Tibial artery (tissue), 4 donors: ENCODE measurements at regions of chr17 and their contacts with region 1.

Region 1: DNA sequence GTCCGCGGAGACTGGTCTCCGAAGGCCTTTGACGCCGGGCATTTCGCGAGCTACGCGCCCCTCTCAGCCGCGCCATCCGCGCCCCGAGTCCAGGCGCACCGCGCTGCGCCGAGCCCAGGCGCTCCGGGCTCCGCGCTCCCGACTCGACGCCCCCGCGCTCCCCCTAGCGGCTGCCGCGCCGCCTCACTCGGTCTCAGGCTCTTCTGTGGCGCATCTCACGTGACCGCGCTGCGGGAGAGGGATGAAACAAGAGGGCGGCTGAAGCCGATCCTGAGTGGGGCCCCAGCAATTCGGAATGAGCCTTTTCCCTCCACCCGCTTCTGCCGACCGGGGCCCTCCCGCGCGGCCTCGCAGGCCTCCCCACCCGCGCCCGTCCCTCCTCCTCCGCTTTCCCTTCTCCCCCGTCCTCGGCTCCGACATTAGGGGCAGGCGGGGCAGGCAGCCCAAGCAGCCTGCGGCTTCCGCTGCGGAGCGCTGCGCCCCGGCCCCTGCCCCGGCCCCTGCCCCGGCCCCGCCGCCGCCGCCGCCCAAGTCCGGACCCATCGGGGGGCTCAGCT is 42.5 kb upstream of the AMZ2 start:
- DNase-seq: peak; percentile 94
- H3K4me3 ChIP-seq: peak overlapping the region; percentile 63 to 67
- H3K27ac ChIP-seq: peak overlapping the region; percentile 59 to 60
- H3K4me1 ChIP-seq: peaks cover 0 to 22% (median 15%) of the 10 kb centered on the region in 4 donors
- H3K27me3 ChIP-seq: peaks cover 0 to 12% of the 10 kb centered on the region in 2 donors
- CTCF ChIP-seq: peak; percentile 89 to 92

Region 2: DNA sequence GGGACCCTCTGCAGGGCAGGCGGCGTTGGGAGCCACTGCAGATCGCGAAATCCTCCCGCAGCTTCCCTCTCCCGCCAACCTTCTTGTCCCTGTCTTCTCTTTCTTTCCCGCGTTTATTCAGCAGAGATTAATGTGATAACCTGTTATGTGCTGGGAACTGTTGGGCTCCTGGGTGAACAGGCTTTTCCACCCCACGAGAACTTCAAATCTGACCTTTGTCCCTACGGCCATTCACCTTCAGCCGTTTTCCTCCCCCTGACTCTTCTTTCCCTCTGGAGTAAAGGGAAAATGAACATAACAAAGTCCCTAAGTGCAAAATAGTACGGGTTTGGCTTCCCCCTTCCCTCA is 184.9 kb before region 1 on chr17:
- intact Hi-C with region 1: no loop called
- DNase-seq: no peak
- H3K4me3 ChIP-seq: peak overlapping the region; percentile 64
- H3K27ac ChIP-seq: peak overlapping the region; percentile 84 to 89
- H3K4me1 ChIP-seq: peaks cover 0 to 6% (median 3%) of the 10 kb centered on the region in 4 donors
- H3K27me3 ChIP-seq: no peaks in the 10 kb centered on the region
- CTCF ChIP-seq: no peak

Region 3: GRCh38 chr17:68161644-68162428 is 43.5 kb before region 1 on chr17:
- intact Hi-C with region 1: no loop called
- DNase-seq: no peak
- H3K4me3 ChIP-seq: no peak overlapping the region
- H3K27ac ChIP-seq: no peak overlapping the region
- H3K4me1 ChIP-seq: no peaks in the 10 kb centered on the region
- H3K27me3 ChIP-seq: no peaks in the 10 kb centered on the region
- CTCF ChIP-seq: no peak

Region 4: GRCh38 chr17:68247445-68248198 is 42.3 kb after region 1 on chr17 and contains the start of gene AMZ2:
- intact Hi-C with region 1: loop called (anchors 5 kb)
- DNase-seq: peak; percentile 89 to 95
- H3K4me3 ChIP-seq: peak within 1 kb of the TSS; percentile 93 to 99
- H3K27ac ChIP-seq: peak within 1 kb of the TSS; percentile 94 to 99
- H3K4me1 ChIP-seq: peaks cover 0 to 15% (median 9%) of the 10 kb centered on the region in 4 donors
- H3K27me3 ChIP-seq: no peaks in the 10 kb centered on the region
- CTCF ChIP-seq: no peak